ENCODE measurements at regions of chr12 and their contacts with region 1.

Region 1: GRCh38 chr12:53287741-53288216 is 7.6 kb upstream of the PFDN5 start:
- DNase-seq: peak; percentile 68 to 73 (median 72)
- H3K4me3 ChIP-seq: no peak overlapping the region
- H3K4me3 Mint-ChIP-seq: peak overlapping the region in 1 of 8 donors; percentile 32
- H3K27ac ChIP-seq: no peak overlapping the region
- H3K27ac Mint-ChIP-seq: peak overlapping the region in 4 of 7 donors; percentile 3 to 71 (median 34)
- H3K4me1 ChIP-seq: no peaks in the 10 kb centered on the region
- H3K4me1 Mint-ChIP-seq: peaks cover 4 to 7% (median 5%) of the 10 kb centered on the region in 4 donors
- H3K27me3 ChIP-seq: no peaks in the 10 kb centered on the region
- H3K27me3 Mint-ChIP-seq: no peaks in the 10 kb centered on the region

Region 2: GRCh38 chr12:53174881-53175491 is 112.8 kb before region 1 on chr12:
- CTCF ChIA-PET with region 1: interaction called, 5 read pairs
- POLR2A ChIA-PET with region 1: interaction called, 3 read pairs
- intact Hi-C with region 1: loop called (anchors 1 kb)
- DNase-seq: no peak
- H3K4me3 ChIP-seq: no peak overlapping the region
- H3K4me3 Mint-ChIP-seq: no peak overlapping the region
- H3K27ac ChIP-seq: no peak overlapping the region
- H3K27ac Mint-ChIP-seq: peak overlapping the region in 1 of 7 donors; percentile 61
- H3K4me1 ChIP-seq: peaks cover 12% of the 10 kb centered on the region
- H3K4me1 Mint-ChIP-seq: peaks cover 8 to 11% (median 11%) of the 10 kb centered on the region in 4 donors
- H3K27me3 ChIP-seq: no peaks in the 10 kb centered on the region
- H3K27me3 Mint-ChIP-seq: no peaks in the 10 kb centered on the region

Region 3: DNA sequence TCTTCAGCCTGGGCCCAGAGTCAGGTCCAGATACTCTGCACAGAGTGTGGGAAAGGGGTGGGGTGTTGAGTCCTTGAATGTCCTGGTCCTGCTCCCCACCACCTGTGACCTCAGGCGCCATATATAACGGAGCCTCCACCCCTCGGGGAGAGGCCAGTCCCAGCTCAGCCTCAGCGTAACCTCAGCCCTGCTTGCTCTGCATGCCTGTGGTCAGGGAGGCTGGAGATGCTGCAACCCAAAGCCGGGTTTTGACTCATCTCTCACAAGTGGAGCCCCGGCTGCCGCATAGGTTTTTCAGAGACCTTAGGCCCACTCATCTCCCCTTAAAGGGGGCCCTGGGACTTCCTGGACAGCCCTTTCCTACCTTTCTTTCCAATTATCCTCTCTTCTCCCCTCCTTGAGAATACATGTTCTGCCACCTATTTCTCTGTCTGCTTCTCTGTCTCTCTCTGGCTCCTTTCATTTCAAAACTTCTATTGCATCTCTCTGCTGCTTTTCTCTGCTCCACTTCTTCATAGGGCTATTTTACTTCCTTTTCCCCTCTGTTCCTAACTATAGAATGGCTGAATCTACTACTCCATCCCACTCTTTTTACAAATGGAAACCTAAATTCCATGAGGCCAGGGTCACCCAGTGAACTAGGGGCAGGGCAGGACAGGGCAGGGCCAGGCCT is 81.9 kb before region 1 on chr12:
- CTCF ChIA-PET with region 1: interaction called, 339 read pairs
- POLR2A ChIA-PET with region 1: interaction called, 16 read pairs
- intact Hi-C with region 1: no loop called
- DNase-seq: peak in 4 of 5 donors; percentile 32 to 80 (median 41)
- H3K4me3 ChIP-seq: peak overlapping the region; percentile 85 to 88
- H3K4me3 Mint-ChIP-seq: peak overlapping the region; percentile 81 to 98 (median 88)
- H3K27ac ChIP-seq: peak overlapping the region; percentile 79
- H3K27ac Mint-ChIP-seq: peak overlapping the region; percentile 76 to 96 (median 91)
- H3K4me1 ChIP-seq: peaks cover 99% of the 10 kb centered on the region
- H3K4me1 Mint-ChIP-seq: peaks cover 40 to 84% (median 64%) of the 10 kb centered on the region in 4 donors
- H3K27me3 ChIP-seq: no peaks in the 10 kb centered on the region
- H3K27me3 Mint-ChIP-seq: no peaks in the 10 kb centered on the region

Region 4: DNA sequence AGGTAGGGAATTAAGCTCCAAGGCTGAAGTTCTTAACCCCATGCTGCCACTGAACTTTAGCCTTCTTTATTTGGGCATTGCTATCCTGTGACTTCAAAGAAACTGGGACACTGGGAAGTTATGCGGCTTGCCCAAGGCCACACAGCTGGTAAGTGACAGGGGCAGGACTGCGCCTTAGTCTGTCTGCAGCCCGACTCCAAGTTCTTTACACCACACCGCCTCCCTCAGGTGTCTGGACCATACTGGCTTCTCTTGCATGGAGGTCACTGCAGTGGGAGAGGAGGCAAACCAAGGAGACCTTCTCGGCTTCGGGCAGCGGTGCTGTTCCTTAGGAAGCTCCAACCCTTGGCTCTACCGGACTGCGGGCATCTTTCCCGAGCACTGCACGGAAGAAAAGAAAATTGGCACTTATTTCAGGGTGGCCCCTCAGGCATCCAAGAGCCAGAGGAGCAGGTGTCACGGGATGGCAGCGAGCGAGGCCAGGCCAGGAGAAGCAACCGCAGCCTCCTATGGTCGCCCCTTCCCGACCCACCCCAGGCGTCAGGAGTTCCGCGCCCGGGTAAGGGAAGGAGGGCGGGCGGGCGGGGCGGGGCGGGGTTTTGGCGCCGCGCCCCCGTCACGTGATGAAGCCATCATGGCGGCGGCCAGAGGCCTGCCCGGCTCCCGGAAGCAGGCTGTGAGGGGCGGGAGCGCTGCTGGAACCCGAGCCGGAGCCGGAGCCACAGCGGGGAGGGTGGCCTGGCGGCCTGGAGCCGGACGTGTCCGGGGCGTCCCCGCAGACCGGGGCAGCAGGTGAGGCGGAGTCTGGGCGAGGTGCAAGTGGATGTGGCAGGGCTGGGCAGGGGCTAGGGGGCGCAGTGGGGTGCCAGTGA is 36.1 kb before region 1 on chr12:
- CTCF ChIA-PET with region 1: interaction called, 29 read pairs
- POLR2A ChIA-PET with region 1: interaction called, 6 read pairs
- intact Hi-C with region 1: loop called (anchors 1 kb)
- DNase-seq: peak; percentile 67 to 78 (median 71)
- H3K4me3 ChIP-seq: peak overlapping the region; percentile 73 to 92
- H3K4me3 Mint-ChIP-seq: peak overlapping the region; percentile 96 to 100 (median 98)
- H3K27ac ChIP-seq: peak overlapping the region; percentile 83
- H3K27ac Mint-ChIP-seq: peak overlapping the region; percentile 96 to 99 (median 98)
- H3K4me1 ChIP-seq: peaks cover 46% of the 10 kb centered on the region
- H3K4me1 Mint-ChIP-seq: peaks cover 23 to 52% (median 41%) of the 10 kb centered on the region in 4 donors
- H3K27me3 ChIP-seq: no peaks in the 10 kb centered on the region
- H3K27me3 Mint-ChIP-seq: no peaks in the 10 kb centered on the region

Region 5: DNA sequence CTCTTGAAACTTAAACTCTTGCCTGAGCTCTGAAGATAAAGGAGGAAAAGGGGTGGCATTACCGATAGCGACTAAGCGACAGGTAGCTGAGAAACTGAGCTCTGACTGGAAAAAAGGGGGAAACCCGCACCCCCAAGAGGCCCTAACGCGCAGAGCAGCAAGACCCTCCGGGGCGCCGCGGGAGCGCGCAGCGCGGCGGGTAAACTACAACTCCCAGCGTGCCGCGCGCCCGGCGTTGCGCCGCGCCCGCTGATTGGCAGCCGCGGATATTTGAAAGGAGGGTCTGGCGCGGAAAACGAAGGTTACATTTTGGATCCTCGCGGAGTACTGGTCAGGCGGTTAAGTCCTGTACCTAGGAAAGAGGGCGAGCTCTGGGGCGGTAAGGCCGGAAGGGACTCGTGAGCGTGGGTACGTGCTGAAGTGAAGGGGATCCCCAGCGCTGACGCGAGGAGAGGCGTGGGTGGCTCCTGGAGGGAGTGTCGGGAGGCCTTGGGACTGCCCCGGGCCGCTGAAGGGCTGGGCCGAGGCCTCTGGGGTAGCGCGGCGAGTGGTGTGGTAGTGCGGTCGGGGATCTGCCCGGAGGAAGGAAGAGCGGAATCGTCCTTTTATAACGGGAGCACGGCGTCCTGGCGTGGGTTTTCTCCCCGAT is 19.7 kb before region 1 on chr12 and contains the start of gene ESPL1:
- CTCF ChIA-PET with region 1: interaction called, 10 read pairs
- POLR2A ChIA-PET with region 1: no interaction called
- intact Hi-C with region 1: no loop called
- DNase-seq: peak; percentile 78 to 82 (median 81)
- H3K4me3 ChIP-seq: peak within 1 kb of the TSS; percentile 76 to 91
- H3K4me3 Mint-ChIP-seq: peak within 1 kb of the TSS; percentile 93 to 100 (median 96)
- H3K27ac ChIP-seq: peak within 1 kb of the TSS; percentile 71
- H3K27ac Mint-ChIP-seq: peak within 1 kb of the TSS; percentile 92 to 97 (median 95)
- H3K4me1 ChIP-seq: peaks cover 10% of the 10 kb centered on the region
- H3K4me1 Mint-ChIP-seq: peaks cover 11 to 29% (median 19%) of the 10 kb centered on the region in 4 donors
- H3K27me3 ChIP-seq: no peaks in the 10 kb centered on the region
- H3K27me3 Mint-ChIP-seq: no peaks in the 10 kb centered on the region
- total RNA-seq, gene ESPL1: 0.20 to 0.55 TPM

Region 6: GRCh38 chr12:53344824-53345485 is 57.2 kb after region 1 on chr12:
- CTCF ChIA-PET with region 1: interaction called, 28 read pairs
- POLR2A ChIA-PET with region 1: no interaction called
- intact Hi-C with region 1: no loop called
- DNase-seq: peak; percentile 62 to 66 (median 65)
- H3K4me3 ChIP-seq: peak overlapping the region in 1 of 2 donors; percentile 73
- H3K4me3 Mint-ChIP-seq: peak overlapping the region; percentile 94 to 99 (median 98)
- H3K27ac ChIP-seq: peak overlapping the region; percentile 44
- H3K27ac Mint-ChIP-seq: peak overlapping the region; percentile 68 to 97 (median 94)
- H3K4me1 ChIP-seq: peaks cover 7% of the 10 kb centered on the region
- H3K4me1 Mint-ChIP-seq: peaks cover 11 to 18% (median 14%) of the 10 kb centered on the region in 4 donors
- H3K27me3 ChIP-seq: no peaks in the 10 kb centered on the region
- H3K27me3 Mint-ChIP-seq: no peaks in the 10 kb centered on the region

Region 7: DNA sequence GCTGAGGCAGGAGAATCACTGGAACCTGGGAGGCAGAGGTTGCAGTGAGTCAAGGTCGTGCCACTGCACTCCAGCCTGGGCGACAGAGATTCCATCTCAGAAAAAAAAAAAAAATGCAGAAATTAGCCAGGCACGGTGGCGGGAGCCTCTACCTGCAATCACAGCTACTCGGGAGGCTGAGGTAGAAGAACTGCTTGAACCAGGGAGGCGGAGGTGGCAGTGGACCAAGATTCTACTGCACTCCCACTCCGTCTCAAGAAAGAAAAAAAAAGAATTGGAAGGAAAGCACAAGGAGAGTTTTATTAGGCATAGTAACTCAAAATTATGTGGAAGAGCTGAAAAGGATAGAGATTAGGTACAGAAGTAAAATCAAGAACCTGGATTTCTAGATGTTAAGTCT is 115.1 kb after region 1 on chr12:
- CTCF ChIA-PET with region 1: no interaction called
- POLR2A ChIA-PET with region 1: no interaction called
- intact Hi-C with region 1: no loop called
- DNase-seq: no peak
- H3K4me3 ChIP-seq: no peak overlapping the region
- H3K4me3 Mint-ChIP-seq: no peak overlapping the region
- H3K27ac ChIP-seq: no peak overlapping the region
- H3K27ac Mint-ChIP-seq: peak overlapping the region in 1 of 7 donors; percentile 42
- H3K4me1 ChIP-seq: no peaks in the 10 kb centered on the region
- H3K4me1 Mint-ChIP-seq: peaks cover 6 to 13% (median 9%) of the 10 kb centered on the region in 4 donors
- H3K27me3 ChIP-seq: no peaks in the 10 kb centered on the region
- H3K27me3 Mint-ChIP-seq: no peaks in the 10 kb centered on the region

Region 8: DNA sequence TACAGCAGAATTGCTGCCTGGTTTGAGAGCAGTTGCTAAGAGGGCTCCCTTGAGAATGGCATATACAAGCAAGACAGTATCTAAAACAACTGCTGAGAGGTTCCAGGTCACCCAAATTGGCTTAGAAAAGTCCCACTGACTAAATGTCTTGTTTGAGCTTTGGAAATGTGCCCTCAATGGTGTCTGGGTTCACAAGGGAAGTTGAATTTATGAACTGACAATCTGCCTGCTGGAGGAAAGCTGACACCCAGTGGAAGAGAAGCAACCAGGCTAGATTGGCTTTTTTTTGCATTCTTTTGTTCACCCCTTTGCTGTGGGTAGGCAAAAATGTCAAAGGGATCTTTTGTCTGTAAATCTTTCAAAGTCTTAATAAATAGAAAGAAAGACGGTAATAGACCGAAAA is 264.1 kb after region 1 on chr12:
- CTCF ChIA-PET with region 1: no interaction called
- POLR2A ChIA-PET with region 1: no interaction called
- intact Hi-C with region 1: no loop called
- DNase-seq: no peak
- H3K4me3 ChIP-seq: no peak overlapping the region
- H3K4me3 Mint-ChIP-seq: peak overlapping the region in 1 of 8 donors; percentile 29
- H3K27ac ChIP-seq: no peak overlapping the region
- H3K27ac Mint-ChIP-seq: peak overlapping the region in 3 of 7 donors; percentile 16 to 79 (median 68)
- H3K4me1 ChIP-seq: no peaks in the 10 kb centered on the region
- H3K4me1 Mint-ChIP-seq: peaks cover 0 to 5% (median 2%) of the 10 kb centered on the region in 4 donors
- H3K27me3 ChIP-seq: no peaks in the 10 kb centered on the region
- H3K27me3 Mint-ChIP-seq: no peaks in the 10 kb centered on the region